Right ventricle myocardium inferior (tissue), 1 donor: ENCODE measurements at regions of chr13 and their contacts with region 1.

Region 1: DNA sequence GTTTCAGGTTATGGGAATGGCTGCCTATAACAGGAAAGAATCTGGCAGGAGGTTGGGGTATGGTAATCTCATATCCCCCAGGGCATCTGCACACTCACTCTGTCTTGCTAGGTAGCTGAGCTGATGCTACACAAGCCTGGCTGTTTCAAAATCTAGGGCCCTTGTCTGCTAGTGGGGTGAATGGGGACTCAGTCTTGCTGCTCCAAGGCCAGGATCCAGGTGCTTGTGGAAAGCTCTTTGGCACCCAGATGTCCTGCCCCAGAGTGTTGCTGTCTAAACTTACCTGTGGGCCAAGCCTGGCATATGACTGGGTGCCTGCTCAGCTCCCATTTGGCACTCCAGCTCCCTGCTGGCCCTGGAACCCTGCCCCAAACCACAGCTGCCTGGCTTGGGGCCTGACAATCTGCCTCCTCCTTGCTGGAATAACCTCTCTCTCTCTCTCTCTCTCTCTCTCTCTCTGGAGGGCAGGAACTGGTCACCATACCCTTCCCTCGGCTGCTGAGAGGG is 158.1 kb upstream of the TSC22D1 start:
- DNase-seq: no peak
- ATAC-seq: peak; percentile 62

Region 2: DNA sequence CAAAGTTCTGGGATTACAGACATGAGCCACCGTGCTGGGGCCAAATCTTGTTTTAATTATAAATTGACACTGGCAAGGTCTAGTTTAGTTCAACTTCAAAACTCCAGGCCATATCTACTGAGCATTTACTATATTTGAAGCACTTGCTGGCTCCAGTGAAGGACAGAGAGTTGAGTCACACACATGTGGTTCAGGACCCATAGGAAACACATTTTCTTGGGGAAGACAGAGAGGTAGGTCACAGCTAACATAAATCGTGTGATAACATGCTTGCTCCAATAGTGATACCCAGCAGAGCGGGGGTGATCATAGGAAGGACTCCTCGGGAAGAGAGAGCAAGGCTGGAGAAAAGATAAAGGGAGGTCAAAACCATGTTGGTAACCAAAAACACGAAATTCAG is 12.4 kb after region 1 on chr13:
- intact Hi-C with region 1: loop called (anchors 2 kb)
- DNase-seq: no peak
- ATAC-seq: peak; percentile 20

Region 3: GRCh38 chr13:44969551-44970484 is 235.6 kb after region 1 on chr13:
- intact Hi-C with region 1: no loop called
- DNase-seq: no peak
- ATAC-seq: peak; percentile 60